AG04450 (cell line): ENCODE measurements at regions of chr16 and their contacts with region 1.

Region 1: DNA sequence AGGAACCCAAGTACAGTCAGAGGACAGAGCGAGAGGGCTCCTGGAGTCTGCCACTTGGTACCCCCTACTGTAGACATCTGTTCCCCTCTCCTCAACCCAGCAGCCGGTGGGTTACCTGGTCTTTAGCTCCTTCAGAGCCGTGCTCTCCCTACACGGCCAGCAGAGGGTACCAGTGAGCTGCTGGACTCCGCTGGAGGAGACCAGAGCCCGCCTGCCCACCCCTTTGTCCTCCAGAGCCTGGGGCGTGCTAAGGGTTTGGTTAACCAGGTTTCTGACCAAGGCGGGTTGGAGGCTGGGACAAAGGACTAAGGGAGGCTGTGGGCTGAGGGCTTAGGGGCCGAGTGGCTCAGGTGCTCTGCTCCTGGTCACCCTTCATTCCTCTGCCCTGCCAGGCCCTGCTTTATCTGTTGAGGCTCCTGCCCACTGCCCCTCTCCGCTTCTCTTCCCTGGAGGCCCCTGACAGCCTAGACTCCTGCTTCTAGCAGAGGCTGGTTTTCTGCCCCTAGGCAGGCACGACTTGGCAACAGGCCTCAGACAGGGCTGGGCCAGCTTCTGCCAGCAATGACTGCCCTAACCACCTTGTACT is 2.7 kb upstream of the HSD11B2 start:
- DNase-seq: no peak
- H3K4me3 ChIP-seq: no peak overlapping the region
- H3K27ac ChIP-seq: no peak overlapping the region
- H3K27me3 ChIP-seq: peaks cover 56% of the 10 kb centered on the region
- CTCF ChIP-seq: peak; percentile 95

Region 2: DNA sequence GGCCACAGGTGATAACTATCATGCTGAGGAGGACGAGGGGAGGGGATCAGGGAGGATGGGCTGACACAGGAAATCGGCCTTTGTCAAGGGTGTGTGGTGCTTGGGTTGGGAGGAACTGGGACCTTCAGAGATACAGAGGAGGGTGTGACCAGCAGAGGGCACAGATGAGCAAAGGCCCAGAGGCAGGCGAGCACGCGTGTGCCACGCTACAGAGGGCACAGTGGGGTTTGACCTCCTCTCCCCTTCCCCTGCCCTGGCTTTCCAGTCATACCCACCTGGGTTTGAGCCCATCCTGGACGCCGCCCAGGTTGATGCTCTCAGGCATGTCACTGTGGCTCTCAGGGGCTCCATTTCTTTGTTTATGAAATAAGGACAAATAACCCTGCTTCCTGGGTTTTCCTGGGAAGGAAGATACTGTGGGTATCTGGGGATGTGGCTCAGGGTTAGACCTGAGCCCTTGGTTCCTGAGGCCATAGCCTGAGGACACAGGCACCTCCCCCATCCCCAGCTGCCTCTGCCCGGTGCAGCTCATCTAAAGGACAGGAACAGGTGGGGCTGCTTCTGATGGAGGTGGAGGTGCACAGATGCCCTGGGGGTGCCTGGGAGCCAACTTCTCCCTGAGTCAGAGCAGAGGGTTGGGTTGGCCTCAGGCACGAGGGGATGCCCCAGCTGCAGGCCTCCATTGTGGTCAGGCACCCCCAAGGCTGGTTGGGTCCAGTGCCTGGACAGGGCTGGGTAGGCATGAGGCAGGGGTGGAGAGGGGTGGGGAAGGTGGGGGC is 949.3 kb before region 1 on chr16:
- CTCF ChIA-PET with region 1: no interaction called
- POLR2A ChIA-PET with region 1: no interaction called
- DNase-seq: no peak
- H3K4me3 ChIP-seq: no peak overlapping the region
- H3K27ac ChIP-seq: no peak overlapping the region
- H3K27me3 ChIP-seq: peaks cover 10% of the 10 kb centered on the region
- CTCF ChIP-seq: peak; percentile 83

Region 3: DNA sequence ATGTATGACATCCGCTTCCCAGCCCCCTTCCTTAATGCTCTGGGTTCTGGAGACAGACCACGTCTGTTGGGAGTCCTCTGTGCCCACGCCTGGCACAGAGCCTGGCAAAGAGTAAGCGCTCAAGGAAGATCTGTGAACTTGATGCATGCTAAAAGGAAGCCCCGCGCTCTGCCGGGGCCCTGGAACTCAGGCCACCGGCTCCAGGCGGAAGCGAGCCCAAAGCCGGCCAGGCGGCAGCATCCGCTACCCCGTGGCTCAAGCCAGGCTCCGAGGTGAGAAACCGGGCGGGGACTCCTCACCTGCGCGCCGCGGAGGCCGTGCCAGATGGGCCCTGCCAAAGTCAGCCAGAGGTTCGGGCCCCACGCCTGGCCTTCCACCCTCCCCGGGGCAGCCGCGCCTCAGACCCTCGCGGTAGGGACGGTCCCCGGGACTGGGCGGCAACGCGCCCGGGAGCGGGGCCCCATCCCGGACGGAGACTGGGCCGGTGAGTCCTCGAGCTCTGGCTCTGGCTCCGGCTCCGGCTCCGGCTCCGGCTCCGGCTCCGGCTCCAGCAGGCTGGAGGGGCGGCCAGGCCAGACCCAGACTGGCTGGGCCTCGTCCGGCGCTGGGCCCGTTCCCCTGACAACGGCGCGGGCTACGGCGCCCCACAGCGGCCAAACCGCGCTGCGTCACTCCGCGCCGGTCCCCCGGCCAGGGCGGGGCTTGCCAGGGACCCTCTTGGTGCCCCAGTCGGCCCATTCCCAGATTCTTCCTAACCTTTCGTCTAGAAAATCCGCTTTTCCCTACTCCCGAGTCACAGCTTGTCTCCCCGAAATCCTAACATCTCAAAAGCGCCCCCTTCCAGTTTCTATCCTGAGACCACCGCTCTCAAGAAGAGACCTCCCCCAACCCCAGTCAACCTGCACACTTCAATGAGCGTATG is 12.1 kb before region 1 on chr16 and contains the start of gene ZDHHC1:
- CTCF ChIA-PET with region 1: interaction called, 34 read pairs
- POLR2A ChIA-PET with region 1: no interaction called
- DNase-seq: no peak
- H3K4me3 ChIP-seq: peak within 1 kb of the TSS; percentile 74
- H3K27ac ChIP-seq: peak within 1 kb of the TSS; percentile 47
- H3K27me3 ChIP-seq: no peaks in the 10 kb centered on the region
- CTCF ChIP-seq: peak; percentile 38
- polyA plus RNA-seq, gene ZDHHC1: 1.9 and 2.7 TPM in 2 replicates

Region 4: GRCh38 chr16:67447508-67448076 is 19.4 kb after region 1 on chr16:
- CTCF ChIA-PET with region 1: interaction called, 36 read pairs
- POLR2A ChIA-PET with region 1: interaction called, 6 read pairs
- DNase-seq: peak; percentile 37
- H3K4me3 ChIP-seq: no peak overlapping the region
- H3K27ac ChIP-seq: peak overlapping the region; percentile 47
- H3K27me3 ChIP-seq: no peaks in the 10 kb centered on the region
- CTCF ChIP-seq: peak; percentile 55

Region 5: DNA sequence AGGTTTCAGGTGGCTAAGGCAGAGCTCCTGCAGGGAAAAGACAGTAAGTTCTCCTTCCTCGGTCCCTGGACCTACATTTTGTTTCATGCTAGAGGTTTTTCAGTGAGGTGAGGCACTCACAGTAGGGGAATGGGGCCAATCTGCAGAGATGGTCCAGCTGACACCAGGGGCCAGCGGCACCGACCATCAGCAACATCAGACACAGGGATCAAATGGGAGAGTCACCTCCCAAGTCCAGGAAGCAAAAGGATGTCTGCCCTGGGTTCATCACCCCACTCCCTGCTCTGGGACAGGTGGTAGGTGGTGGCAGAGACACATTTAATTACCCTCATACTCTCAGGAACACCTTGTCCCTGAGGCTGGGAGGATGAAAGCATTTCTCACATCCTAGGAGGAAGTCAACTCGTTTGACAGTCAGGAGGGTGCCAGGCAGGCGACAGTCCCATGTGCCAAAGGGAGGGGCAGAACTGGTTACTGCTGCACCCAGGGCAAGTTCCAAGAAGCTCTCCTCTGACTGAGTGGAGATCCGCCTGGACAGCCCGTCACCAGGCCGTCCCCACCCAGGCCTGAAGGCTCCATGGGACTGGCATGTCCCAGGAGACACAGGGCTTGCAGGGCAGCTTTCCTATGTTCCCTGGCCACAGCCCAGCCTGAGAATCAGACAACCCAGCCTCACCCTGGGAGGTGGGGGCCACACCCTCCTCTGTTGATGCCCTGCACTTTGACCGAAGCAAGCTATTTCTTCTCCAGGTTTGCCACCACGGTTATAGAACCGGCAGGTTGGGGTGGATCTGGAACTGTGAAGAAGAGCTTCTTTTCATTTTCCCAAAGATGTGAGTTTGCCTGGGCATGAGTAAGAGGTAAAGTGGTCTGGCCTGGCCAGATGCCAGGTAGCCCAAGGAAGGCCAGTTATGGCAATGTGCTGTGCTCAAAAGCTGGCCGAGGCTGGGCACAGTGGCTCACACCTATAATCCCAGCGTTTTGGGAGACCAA is 33.7 kb after region 1 on chr16:
- CTCF ChIA-PET with region 1: interaction called, 154 read pairs
- POLR2A ChIA-PET with region 1: interaction called, 6 read pairs
- DNase-seq: no peak
- H3K4me3 ChIP-seq: no peak overlapping the region
- H3K27ac ChIP-seq: no peak overlapping the region
- H3K27me3 ChIP-seq: no peaks in the 10 kb centered on the region
- CTCF ChIP-seq: no peak

Region 6: DNA sequence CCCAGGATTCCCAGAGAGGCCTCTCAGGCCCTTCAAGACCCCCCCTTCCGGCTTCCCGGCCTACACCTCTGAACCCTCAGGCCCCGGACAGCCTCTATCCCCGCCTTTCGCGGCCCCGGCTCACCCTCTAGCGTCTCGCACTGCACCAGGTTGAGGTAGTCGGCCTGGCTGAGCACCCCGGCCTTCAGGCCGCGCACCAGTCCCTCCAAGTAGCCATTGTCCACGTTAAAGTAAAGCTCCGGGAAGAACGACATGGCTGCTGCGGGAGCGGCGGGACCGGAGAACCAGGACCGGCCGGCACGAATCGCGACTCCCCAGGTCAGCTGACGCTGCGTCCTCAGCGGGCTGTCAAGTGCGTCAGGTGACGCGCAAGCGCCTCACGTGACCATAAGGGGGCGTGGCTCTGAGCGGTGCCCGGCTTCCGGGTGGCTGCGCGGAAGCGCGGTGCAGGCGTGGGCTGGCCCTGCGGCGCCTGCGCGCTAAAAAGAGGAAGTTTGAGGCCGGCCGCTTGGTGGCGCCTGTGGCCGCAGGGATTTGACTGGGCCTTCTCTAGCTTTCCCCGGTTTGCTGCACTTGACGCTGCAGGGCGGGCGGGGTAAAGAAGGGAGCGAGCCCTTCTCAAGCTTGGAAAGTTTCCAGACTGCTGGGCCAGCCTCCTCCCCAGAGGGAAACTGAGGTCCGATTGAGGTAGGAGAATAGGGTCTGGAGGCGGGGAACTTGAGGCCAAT is 52.8 kb after region 1 on chr16 and contains the start of gene ATP6V0D1:
- CTCF ChIA-PET with region 1: interaction called, 14 read pairs
- POLR2A ChIA-PET with region 1: interaction called, 3 read pairs
- DNase-seq: peak; percentile 96
- H3K4me3 ChIP-seq: peak within 1 kb of the TSS; percentile 96
- H3K27ac ChIP-seq: peak within 1 kb of the TSS; percentile 92
- H3K27me3 ChIP-seq: no peaks in the 10 kb centered on the region
- CTCF ChIP-seq: peak; percentile 89
- polyA plus RNA-seq, gene ATP6V0D1: 101 and 121 TPM in 2 replicates

Region 7: DNA sequence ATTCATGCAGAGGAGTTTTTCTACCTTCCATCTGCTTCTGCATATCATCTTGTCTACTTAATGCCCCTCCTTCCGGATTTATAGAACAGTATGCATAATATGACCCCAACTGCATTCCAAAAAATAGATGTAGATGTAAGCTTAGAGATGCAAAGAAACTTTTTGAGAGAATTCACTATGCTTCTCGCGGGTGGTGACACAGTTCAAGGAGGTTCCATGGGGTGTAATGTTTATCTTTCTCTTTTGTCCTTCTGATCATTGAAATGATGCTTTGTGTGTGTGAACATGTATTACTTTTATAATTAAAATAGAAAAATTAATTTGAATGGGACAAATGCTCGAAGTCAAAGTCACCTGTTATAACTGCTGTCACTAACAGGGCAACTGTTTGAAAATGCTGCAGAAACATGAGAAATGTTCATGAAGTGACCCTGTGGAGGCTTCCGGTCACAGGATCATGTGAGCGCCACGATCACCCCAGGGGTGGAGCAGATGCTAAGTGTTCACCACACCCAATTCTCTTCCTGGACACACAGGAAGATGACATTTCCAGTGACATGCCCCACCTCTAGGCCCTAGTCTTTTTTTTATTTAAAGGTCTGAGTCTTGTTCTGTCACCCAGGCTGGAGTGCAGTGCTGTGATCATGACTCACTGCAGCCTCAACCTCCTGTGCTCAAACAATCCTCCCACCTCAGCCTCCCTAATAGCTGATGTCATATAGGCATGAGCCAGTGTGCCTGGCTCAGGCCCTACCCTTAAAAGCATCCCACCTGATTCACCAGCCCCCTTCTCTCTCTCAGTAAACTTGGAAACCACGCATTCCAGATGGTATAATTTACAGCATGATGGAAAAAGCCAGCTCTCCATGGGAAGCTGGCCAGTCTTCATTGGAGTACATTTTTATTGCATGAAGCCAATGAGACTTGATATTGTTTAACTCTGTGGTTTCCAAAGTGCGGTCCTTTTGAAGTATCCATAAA is 76.1 kb after region 1 on chr16:
- CTCF ChIA-PET with region 1: no interaction called
- POLR2A ChIA-PET with region 1: no interaction called
- DNase-seq: no peak
- H3K4me3 ChIP-seq: no peak overlapping the region
- H3K27ac ChIP-seq: no peak overlapping the region
- H3K27me3 ChIP-seq: no peaks in the 10 kb centered on the region
- CTCF ChIP-seq: no peak